ENCODE measurements at regions of chr16 and their contacts with region 1.

Region 1: GRCh38 chr16:788394-789126 is at the start of gene CHTF18:
- DNase-seq: peak; percentile 90 to 94
- ATAC-seq: peak; percentile 80 to 97 (median 94)
- H3K4me3 ChIP-seq: peak within 1 kb of the TSS; percentile 81 to 99 (median 94)
- H3K27ac ChIP-seq: peak within 1 kb of the TSS in 9 of 10 donors; percentile 59 to 88 (median 78)
- H3K4me1 ChIP-seq: peaks cover 12 to 37% (median 24%) of the 10 kb centered on the region in 9 donors
- H3K27me3 ChIP-seq: peaks cover 0 to under 1% (median 0%) of the 10 kb centered on the region in 7 donors
- CTCF ChIP-seq: no peak
- total RNA-seq, gene CHTF18: 2.8 to 8.2 (median 5.2) TPM

Region 2: GRCh38 chr16:740764-741505 is 47.6 kb before region 1 on chr16 and contains the start of gene CIAO3:
- intact Hi-C with region 1: loop called in 1 of 10 experiments (anchors 5 kb)
- DNase-seq: peak; percentile 87 to 91
- ATAC-seq: peak; percentile 91 to 96 (median 92)
- H3K4me3 ChIP-seq: peak within 1 kb of the TSS; percentile 68 to 100 (median 94)
- H3K27ac ChIP-seq: peak within 1 kb of the TSS in 9 of 10 donors; percentile 44 to 90 (median 82)
- H3K4me1 ChIP-seq: peaks cover 7 to 19% (median 15%) of the 10 kb centered on the region in 9 donors
- H3K27me3 ChIP-seq: peaks cover 0 to 18% (median 4%) of the 10 kb centered on the region in 7 donors
- CTCF ChIP-seq: peak; percentile 88 to 99 (median 97)
- total RNA-seq, gene CIAO3: 18.7 to 33.0 (median 24.1) TPM

Region 3: DNA sequence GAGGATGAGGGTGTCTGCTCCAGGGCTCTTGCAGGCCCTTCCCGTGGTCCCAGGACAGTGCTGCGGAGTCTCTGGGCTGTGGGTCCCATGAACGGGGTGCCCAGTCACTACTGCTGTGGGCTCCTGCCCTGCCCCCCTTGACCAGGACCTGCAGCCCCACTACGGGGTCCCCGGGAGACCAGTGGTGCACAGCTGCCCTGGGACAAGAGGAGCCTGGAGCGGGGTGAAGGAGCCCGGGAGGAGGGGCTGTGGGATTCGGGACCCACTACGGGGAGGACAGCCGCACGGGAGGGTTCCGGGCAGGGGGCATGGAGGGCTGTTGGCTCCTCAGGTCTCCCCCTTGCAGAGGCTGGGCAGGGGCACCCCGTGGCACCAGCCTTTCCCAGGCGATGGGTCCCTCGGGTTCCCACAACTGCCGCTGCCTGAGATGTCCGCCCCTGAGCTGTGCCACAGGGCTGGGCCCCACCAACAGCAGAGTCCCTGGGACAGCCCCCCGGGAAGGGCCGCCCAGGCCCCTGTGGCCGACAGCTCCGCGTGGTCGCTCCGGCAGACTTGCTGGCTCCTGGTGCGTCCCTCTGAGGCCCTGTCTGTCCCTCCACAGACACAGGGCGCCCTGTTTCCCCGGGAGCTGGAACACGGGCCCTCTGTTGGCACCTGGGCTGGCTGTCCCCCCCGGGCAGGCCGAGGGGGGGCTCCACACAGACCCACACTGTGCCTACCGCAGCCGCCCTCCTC is 64.1 kb after region 1 on chr16:
- intact Hi-C with region 1: no loop called
- DNase-seq: no peak
- ATAC-seq: peak in 1 of 8 donors; percentile 10
- H3K4me3 ChIP-seq: no peak overlapping the region
- H3K27ac ChIP-seq: no peak overlapping the region
- H3K4me1 ChIP-seq: no peaks in the 10 kb centered on the region
- H3K27me3 ChIP-seq: peaks cover 0 to 6% (median 0%) of the 10 kb centered on the region in 7 donors
- CTCF ChIP-seq: no peak